Activated T-helper 2 cell treated with anti-CD3 and anti-CD28 coated beads, Interferon-gamma antibody, Interleukin-2, Interleukin-4, amounts not matched to agents 10 μg/mL and 5 μg/mL and 100 μg/mL, durations not matched to agents 14 hours and 24 hours and 36 hours (primary cell): ENCODE measurements at regions of chr7 and their contacts with region 1.

Region 1: GRCh38 chr7:35037526-35038339 is 448 bp upstream of the DPY19L1 start:
- DNase-seq: peak; percentile 86
- H3K4me3 Mint-ChIP-seq: peak overlapping the region; percentile 90
- H3K27ac Mint-ChIP-seq: peak overlapping the region; percentile 79
- H3K4me1 Mint-ChIP-seq: peaks cover 23% of the 10 kb centered on the region
- H3K27me3 Mint-ChIP-seq: peaks cover 30% of the 10 kb centered on the region

Region 2: GRCh38 chr7:34823640-34824258 is 214.0 kb before region 1 on chr7:
- intact Hi-C with region 1: loop called (anchors 1 kb)
- DNase-seq: no peak
- H3K4me3 Mint-ChIP-seq: no peak overlapping the region
- H3K27ac Mint-ChIP-seq: no peak overlapping the region
- H3K4me1 Mint-ChIP-seq: peaks cover 2% of the 10 kb centered on the region
- H3K27me3 Mint-ChIP-seq: no peaks in the 10 kb centered on the region

Region 3: DNA sequence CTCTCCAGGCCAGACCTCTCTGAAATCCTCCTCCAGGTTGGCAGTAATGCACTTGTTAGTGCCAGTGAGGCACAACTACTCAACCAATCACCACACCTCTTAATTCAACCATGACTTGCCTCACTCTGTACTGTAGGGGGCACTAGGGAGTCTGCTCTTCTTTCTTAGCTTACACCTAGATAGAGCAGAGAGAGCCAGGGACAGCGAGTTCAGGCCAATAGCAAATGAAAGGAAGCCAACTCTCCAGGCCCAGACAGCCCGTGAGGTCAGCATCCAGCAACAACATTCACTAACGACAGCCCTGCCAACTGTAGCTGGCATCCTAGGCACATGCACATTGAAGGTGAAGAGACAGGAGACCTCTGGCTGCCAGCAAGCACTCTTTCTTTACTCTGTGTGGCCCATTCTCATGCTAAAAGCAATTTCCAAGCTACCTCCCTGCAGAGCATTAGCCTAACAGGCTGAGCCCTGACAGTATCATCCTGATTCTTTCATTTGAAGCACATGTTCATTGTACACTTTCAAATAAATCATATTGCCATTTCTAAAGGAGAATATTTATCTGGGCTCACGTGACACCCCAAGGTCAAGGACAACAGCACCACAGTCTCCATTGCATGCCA is 136.7 kb before region 1 on chr7:
- intact Hi-C with region 1: no loop called
- DNase-seq: no peak
- H3K4me3 Mint-ChIP-seq: no peak overlapping the region
- H3K27ac Mint-ChIP-seq: no peak overlapping the region
- H3K4me1 Mint-ChIP-seq: no peaks in the 10 kb centered on the region
- H3K27me3 Mint-ChIP-seq: peaks cover 8% of the 10 kb centered on the region

Region 4: GRCh38 chr7:34991938-34992840 is 45.5 kb before region 1 on chr7:
- intact Hi-C with region 1: loop called (anchors 1 kb)
- DNase-seq: peak; percentile 19
- H3K4me3 Mint-ChIP-seq: no peak overlapping the region
- H3K27ac Mint-ChIP-seq: peak overlapping the region; percentile 79
- H3K4me1 Mint-ChIP-seq: peaks cover 37% of the 10 kb centered on the region
- H3K27me3 Mint-ChIP-seq: no peaks in the 10 kb centered on the region

Region 5: GRCh38 chr7:35003679-35004303 is 33.9 kb before region 1 on chr7:
- intact Hi-C with region 1: loop called (anchors 2 kb)
- DNase-seq: no peak
- H3K4me3 Mint-ChIP-seq: no peak overlapping the region
- H3K27ac Mint-ChIP-seq: no peak overlapping the region
- H3K4me1 Mint-ChIP-seq: peaks cover 10% of the 10 kb centered on the region
- H3K27me3 Mint-ChIP-seq: no peaks in the 10 kb centered on the region

Region 6: DNA sequence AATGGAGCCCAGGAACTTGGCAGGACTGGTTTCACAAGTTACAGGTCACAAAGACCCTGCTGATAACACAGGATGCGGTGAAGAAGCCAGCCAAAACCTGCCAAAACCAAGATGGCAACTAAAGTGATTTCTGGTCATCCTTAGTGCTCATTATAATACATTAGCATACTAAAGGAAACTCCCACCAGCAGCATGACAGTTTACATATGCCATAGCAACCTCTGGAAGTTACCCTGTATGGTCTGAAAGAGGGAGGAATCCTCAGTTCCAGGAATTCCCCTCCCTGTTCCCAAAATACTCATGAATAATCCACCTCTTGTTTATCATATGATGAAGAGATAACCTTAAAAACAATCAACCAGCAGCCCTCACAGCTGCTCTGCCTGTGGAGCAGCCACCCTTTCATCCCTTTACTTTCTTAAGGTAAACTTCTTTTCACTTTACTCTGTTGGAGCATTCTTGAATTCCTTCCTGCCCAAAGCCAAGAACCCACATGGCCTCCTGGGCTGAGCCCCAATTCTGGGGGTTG is 22.3 kb before region 1 on chr7:
- intact Hi-C with region 1: no loop called
- DNase-seq: no peak
- H3K4me3 Mint-ChIP-seq: no peak overlapping the region
- H3K27ac Mint-ChIP-seq: no peak overlapping the region
- H3K4me1 Mint-ChIP-seq: no peaks in the 10 kb centered on the region
- H3K27me3 Mint-ChIP-seq: no peaks in the 10 kb centered on the region

Region 7: DNA sequence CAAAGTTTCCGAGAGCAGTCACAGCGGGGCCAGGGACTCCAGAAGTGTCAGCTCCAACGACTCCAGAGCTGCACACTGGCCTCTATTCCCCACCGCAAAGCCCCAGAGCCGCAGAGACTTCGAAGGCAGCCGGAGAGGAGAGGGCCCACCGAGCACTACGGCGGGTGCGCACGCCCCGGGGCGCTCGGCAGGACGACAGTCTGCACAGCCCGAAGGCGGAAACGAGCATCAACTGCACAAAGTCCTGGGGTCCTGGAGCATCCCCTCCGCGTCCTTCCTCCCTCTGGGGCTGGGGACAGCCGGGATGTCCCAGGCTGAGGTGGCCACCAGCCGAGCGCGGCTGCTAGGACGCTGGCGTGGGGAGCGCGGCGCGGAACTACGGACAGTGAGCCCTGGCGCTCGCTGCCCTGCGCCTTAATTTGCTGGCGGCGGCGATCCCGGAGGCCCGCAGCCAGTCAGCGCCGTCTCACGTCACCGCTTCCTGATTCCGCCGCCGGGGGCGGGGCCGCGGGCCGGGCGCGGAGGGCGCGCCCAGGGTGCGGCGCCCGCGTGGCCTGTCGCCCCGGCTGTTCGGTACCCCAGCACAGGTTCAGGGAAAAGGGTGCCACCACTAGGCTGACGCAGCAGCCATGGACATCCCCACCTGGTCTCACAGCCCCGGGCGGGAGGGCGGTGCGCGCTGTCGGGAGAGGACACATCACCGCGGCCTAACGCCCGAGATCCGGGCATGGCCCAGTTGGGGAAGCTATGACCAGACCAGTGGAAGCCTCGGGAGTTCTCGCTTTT is 216.2 kb after region 1 on chr7 and contains the start of gene TBX20:
- intact Hi-C with region 1: loop called (anchors 2 kb)
- DNase-seq: peak; percentile 29
- H3K4me3 Mint-ChIP-seq: peak within 1 kb of the TSS; percentile 71
- H3K27ac Mint-ChIP-seq: no peak within 1 kb of the TSS
- H3K4me1 Mint-ChIP-seq: peaks cover 11% of the 10 kb centered on the region
- H3K27me3 Mint-ChIP-seq: peaks cover 86% of the 10 kb centered on the region
- total RNA-seq, gene TBX20: 0.11 and 0.39 TPM in 2 replicates

Region 8: GRCh38 chr7:36152756-36153570 is 1115.2 kb after region 1 on chr7 and contains the start of gene EEPD1:
- intact Hi-C with region 1: loop called (anchors 2 kb)
- DNase-seq: peak; percentile 99
- H3K4me3 Mint-ChIP-seq: peak within 1 kb of the TSS; percentile 70
- H3K27ac Mint-ChIP-seq: peak within 1 kb of the TSS; percentile 36
- H3K4me1 Mint-ChIP-seq: peaks cover 9% of the 10 kb centered on the region
- H3K27me3 Mint-ChIP-seq: peaks cover 27% of the 10 kb centered on the region
- total RNA-seq, gene EEPD1: 0.57 and 0.67 TPM in 2 replicates